Ascending aorta (tissue), 2 donors: ENCODE measurements at regions of chr15 and their contacts with region 1.

Region 1: DNA sequence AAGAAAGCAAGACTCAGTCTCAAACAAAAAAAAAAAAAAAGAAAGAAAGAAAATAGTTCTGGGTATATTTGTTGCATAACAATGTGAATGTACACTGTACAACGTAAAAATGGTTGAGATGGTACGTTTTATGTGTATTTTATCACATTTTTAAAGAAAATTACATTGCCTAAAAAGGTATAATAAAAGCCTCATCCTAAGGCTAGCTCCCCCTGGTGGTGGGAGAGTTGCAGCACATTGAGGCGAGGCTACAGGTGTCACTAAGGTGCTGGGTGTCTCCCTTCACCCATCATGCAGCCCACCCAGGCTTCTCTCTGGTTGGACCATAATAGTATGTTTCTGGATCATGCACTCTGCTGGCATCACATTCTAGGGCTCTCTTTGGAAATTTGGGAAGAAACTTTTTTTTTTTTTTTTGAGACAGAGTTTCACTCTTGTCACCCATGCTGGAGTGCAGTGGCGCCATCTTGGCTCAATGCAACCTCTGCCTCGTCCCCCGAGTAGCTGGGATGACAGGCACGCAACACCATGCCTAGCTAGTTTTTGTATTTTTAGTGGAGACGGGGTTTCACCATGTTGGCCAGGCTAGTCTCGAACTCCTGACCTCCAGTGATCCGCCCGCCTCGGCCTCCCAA is 12.4 kb upstream of the RAB11A start:
- DNase-seq: peak; percentile 21 to 87
- H3K4me3 ChIP-seq: no peak overlapping the region
- H3K27ac ChIP-seq: no peak overlapping the region
- H3K4me1 ChIP-seq: no peaks in the 10 kb centered on the region
- H3K27me3 ChIP-seq: no peaks in the 10 kb centered on the region
- CTCF ChIP-seq: peak; percentile 63 to 83 (median 77)

Region 2: DNA sequence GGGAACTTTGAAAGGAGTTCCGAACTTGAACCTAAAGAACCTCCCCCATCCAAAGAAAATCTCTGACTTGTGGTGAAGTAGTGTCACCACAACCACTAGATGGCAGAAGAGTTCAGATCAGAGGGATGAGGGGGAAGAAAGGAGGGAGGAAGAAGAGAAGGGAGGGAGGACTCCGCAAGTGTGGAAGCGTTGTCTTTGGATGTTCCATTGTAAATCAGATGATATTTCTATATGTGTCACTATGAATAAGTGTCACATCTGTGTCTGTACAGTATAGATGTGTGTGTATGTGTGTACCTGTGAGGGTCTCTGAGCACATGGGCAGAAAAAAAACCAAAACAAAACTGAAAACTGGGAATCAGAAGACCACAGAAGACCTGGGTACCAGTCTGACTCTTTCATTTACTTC is 218.3 kb before region 1 on chr15:
- intact Hi-C with region 1: loop called (anchors 10 kb)
- DNase-seq: no peak
- H3K4me3 ChIP-seq: peak overlapping the region in 1 of 2 donors; percentile 26
- H3K27ac ChIP-seq: no peak overlapping the region
- H3K4me1 ChIP-seq: peaks cover 0 to 2% of the 10 kb centered on the region in 2 donors
- H3K27me3 ChIP-seq: no peaks in the 10 kb centered on the region
- CTCF ChIP-seq: peak; percentile 62 to 79 (median 65)